ENCODE measurements at regions of chr17 and their contacts with region 1.

Region 1: GRCh38 chr17:17919169-17920107 is 52.8 kb downstream of the TOM1L2 start:
- DNase-seq: peak; percentile 86 to 96
- ATAC-seq: peak; percentile 67 to 79
- H3K4me3 ChIP-seq: no peak overlapping the region
- H3K27ac ChIP-seq: peak overlapping the region; percentile 90 to 92
- H3K4me1 ChIP-seq: peaks cover 65% of the 10 kb centered on the region
- CTCF ChIP-seq: peak; percentile 96
- EP300 ChIP-seq: no peak
- POLR2A ChIP-seq: no peak
- RAD21 ChIP-seq: peak; percentile 99

Region 2: DNA sequence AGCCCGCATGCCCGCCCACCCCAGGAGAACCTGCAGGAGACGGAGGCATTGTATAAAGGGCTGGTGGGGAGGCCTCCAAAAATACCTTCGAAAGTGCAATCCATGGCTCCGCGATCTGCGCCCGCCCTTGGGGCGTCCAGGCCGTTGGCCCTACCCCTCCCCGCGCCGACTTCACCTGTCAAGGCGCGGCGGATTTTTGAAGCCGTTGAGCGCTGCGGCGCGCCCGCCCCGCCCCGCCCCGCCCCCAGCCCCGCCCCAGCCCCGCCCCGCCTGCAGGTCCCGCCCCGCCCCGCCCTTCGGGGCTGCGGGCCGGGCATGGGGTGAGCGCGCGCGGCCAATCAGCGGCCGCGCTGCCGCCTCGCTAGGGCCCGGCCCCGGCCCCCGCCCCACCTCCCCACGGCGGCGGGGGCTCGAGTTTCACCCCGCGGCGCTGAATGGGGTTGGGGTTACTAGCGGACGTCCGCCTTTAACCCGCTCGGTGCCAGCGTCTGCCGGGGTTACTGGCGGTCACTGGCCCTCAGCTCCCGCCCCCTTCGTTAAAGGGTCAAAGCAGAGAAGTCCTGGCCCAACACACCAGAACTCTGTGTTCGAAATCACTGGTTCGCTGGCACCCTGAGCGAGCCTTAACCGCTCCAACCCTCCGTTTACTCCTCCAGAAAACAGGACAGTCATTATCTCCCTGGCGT is 95.9 kb before region 1 on chr17:
- CTCF ChIA-PET with region 1: interaction called, 14 read pairs
- POLR2A ChIA-PET with region 1: interaction called, 5 read pairs
- DNase-seq: peak; percentile 90 to 98
- ATAC-seq: peak; percentile 55 to 76
- H3K4me3 ChIP-seq: peak overlapping the region; percentile 53
- H3K27ac ChIP-seq: peak overlapping the region; percentile 93 to 96
- H3K4me1 ChIP-seq: peaks cover 96% of the 10 kb centered on the region
- CTCF ChIP-seq: no peak
- EP300 ChIP-seq: peak in 1 of 2 experiments; percentile 37; a peak in 1 of 5 replicates
- POLR2A ChIP-seq: no peak
- RAD21 ChIP-seq: no peak; a peak in 1 of 5 replicates

Region 3: GRCh38 chr17:17859909-17860765 is 59.3 kb before region 1 on chr17:
- CTCF ChIA-PET with region 1: interaction called, 37 read pairs
- POLR2A ChIA-PET with region 1: no interaction called
- DNase-seq: peak; percentile 72 to 97
- ATAC-seq: peak; percentile 94 to 97
- H3K4me3 ChIP-seq: no peak overlapping the region
- H3K27ac ChIP-seq: peak overlapping the region; percentile 15 to 61; a peak in 4 of 6 replicates
- H3K4me1 ChIP-seq: peaks cover 8% of the 10 kb centered on the region; the same call in 2 of the 3 replicates
- CTCF ChIP-seq: peak; percentile 99
- EP300 ChIP-seq: no peak
- POLR2A ChIP-seq: no peak
- RAD21 ChIP-seq: peak; percentile 98 to 99

Region 4: DNA sequence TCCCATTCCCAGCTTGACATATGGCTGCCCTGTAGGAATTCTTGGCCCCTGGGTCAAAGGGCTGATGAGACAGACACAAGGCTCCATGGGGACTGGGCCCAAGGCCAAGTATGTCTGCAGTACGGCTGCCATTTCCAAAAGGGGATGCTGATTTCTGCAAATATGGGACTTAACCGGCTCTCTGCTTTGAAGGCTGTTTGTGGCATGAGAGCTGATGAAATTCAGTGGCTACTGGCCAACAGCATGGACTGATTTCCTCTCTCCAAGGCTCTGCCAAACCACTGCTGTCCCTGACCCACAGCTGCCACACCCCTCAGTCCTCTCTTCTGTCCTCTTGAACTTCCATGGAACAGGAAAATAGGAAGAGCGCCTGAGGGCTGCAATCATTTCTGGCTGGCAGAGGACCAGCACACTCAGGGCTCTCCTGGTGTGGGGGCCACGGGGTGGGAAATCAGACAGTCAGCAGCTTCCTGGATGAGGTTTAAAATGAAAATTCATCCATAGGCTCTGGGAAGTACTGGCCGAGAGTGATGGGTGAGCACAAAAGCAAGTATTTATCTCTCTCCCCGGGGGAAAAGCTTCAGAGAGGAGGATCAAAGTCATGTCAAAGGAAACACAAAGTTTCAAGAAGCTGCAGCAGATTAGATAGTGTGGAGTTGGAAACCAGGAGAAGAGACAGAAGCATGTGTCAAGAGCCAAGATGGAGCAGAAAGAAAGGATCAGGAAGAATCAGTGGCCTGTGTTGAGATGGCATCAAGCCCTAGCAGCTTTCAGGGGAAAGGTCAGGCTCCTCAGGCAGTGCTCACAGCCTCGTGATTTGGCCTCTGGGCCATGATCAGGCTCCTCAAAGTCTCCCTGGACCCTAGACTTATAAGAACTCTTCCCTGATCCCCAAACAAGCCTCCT is 18.6 kb before region 1 on chr17:
- CTCF ChIA-PET with region 1: interaction called, 313 read pairs
- POLR2A ChIA-PET with region 1: interaction called, 5 read pairs
- DNase-seq: peak; percentile 83 to 85
- ATAC-seq: peak; percentile 83 to 84
- H3K4me3 ChIP-seq: no peak overlapping the region
- H3K27ac ChIP-seq: peak overlapping the region; percentile 74 to 84
- H3K4me1 ChIP-seq: peaks cover 50% of the 10 kb centered on the region
- CTCF ChIP-seq: no peak
- EP300 ChIP-seq: peak; percentile 12 to 78; a peak in 2 of 5 replicates
- POLR2A ChIP-seq: no peak
- RAD21 ChIP-seq: no peak

Region 5: GRCh38 chr17:17959520-17960361 is 40.3 kb after region 1 on chr17:
- CTCF ChIA-PET with region 1: interaction called, 24 read pairs
- POLR2A ChIA-PET with region 1: interaction called, 4 read pairs
- DNase-seq: peak; percentile 33 to 56
- ATAC-seq: peak; percentile 9 to 21; a peak in 4 of 6 replicates
- H3K4me3 ChIP-seq: peak overlapping the region; percentile 20; the same call in 2 of the 3 replicates
- H3K27ac ChIP-seq: peak overlapping the region; percentile 74 to 83
- H3K4me1 ChIP-seq: peaks cover 39% of the 10 kb centered on the region
- CTCF ChIP-seq: no peak
- EP300 ChIP-seq: no peak
- POLR2A ChIP-seq: no peak
- RAD21 ChIP-seq: 0 out of 5 replicates have a peak, but pooled peaks of 1 of the 2 experiments have one; percentile 1

Region 6: GRCh38 chr17:17994271-17995069 is 75.0 kb after region 1 on chr17:
- CTCF ChIA-PET with region 1: interaction called, 15 read pairs
- POLR2A ChIA-PET with region 1: no interaction called
- DNase-seq: peak; percentile 62 to 74
- ATAC-seq: peak; percentile 73 to 82
- H3K4me3 ChIP-seq: no peak overlapping the region
- H3K27ac ChIP-seq: peak overlapping the region in 1 of 2 experiments; percentile 84; a peak in 2 of 6 replicates
- H3K4me1 ChIP-seq: peaks cover 38% of the 10 kb centered on the region
- CTCF ChIP-seq: peak; percentile 52
- EP300 ChIP-seq: no peak
- POLR2A ChIP-seq: no peak
- RAD21 ChIP-seq: peak; percentile 38 to 48; a peak in 3 of 5 replicates